Posterior cingulate gyrus (tissue), 11 donors: ENCODE measurements at regions of chr3 and their contacts with region 1.

Region 1: DNA sequence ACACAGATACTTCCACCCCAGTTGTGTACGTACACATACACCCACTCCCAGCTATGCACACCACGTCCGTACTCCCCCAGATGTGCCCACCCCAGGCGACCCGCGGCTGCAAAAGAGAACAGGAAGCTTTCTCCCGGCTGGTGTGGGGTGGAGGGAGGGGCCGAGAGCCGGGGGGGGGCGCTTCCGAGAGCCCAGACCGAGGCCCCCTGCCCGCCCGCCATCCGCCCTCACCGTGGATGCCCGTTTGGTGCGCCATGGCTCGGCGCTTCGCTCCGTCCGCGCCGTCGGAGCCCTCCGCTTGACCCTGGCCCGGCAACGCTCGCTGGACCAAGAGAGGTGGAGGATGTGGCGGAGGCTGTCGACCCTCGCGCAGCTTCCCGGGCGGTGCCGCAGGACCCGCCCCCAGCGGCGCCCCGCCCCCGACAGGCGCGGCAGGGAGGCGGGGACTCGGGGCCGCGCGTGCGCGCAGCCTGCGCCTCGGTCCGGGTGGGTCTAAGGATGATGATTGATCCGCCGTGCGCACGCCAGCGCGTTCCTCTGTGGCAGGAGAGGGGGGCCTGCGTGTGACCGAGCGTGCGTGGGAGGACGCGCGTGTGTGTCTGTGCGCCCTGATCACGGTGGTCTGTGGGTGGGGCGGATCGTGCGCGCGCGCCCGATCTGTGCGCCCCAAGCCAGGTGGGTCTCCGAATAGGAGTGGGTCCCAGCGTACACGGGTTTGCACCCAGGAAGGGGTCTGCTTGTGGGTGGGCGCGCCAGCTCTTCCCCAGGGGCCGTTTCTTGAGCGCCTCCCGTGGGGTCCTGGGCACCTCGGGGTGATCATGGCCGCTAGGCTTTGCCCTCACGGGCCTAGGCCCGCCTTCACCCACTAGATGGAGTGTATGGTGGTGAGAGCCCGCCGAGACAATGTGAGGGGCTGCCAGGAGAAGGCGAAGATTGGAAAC is at the start of gene TWF2:
- DNase-seq: peak; percentile 66 to 98 (median 83)

Region 2: GRCh38 chr3:52278510-52279069 is 39.6 kb after region 1 on chr3 and contains the start of gene WDR82:
- intact Hi-C with region 1: loop called (anchors 2 kb)
- DNase-seq: peak; percentile 97 to 100 (median 98)